ENCODE measurements at regions of chr13 and their contacts with region 1.

Region 1: DNA sequence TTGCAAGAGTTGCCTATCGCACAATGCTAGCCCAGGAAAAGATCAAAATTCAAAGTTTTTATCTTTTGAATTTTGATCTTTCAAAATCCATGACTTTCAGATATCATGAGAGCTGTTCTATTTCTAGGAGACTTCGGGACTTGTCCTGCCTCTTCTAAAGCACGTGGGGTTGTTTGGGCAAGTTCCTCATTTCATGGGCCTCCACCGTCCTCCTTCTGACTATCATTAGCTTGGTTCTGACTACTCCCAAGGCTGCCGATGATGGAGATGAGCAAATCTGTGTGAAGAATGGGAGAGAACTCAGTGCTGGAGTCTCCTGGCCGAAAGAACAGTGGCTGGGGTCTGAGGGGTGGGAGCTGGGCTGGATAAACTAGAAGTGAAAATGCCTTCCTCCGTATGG is 86.5 kb downstream of the COL4A1 start:
- DNase-seq: peak; percentile 9
- ATAC-seq: no peak
- H3K4me3 Mint-ChIP-seq: no peak overlapping the region
- H3K27ac Mint-ChIP-seq: no peak overlapping the region
- H3K4me1 Mint-ChIP-seq: no peaks in the 10 kb centered on the region
- H3K27me3 Mint-ChIP-seq: peaks cover 13% of the 10 kb centered on the region

Region 2: GRCh38 chr13:109945206-109945960 is 275.1 kb before region 1 on chr13:
- CTCF ChIA-PET with region 1: no interaction called
- DNase-seq: no peak
- ATAC-seq: no peak
- H3K4me3 Mint-ChIP-seq: no peak overlapping the region
- H3K27ac Mint-ChIP-seq: no peak overlapping the region
- H3K4me1 Mint-ChIP-seq: no peaks in the 10 kb centered on the region
- H3K27me3 Mint-ChIP-seq: no peaks in the 10 kb centered on the region

Region 3: GRCh38 chr13:110412132-110412914 is 191.9 kb after region 1 on chr13:
- CTCF ChIA-PET with region 1: interaction called, 34 read pairs
- DNase-seq: peak; percentile 73
- ATAC-seq: peak; percentile 76
- H3K4me3 Mint-ChIP-seq: no peak overlapping the region
- H3K27ac Mint-ChIP-seq: no peak overlapping the region
- H3K4me1 Mint-ChIP-seq: peaks cover 4% of the 10 kb centered on the region
- H3K27me3 Mint-ChIP-seq: peaks cover 40% of the 10 kb centered on the region